ENCODE measurements at regions of chr1 and their contacts with region 1.

Region 1: DNA sequence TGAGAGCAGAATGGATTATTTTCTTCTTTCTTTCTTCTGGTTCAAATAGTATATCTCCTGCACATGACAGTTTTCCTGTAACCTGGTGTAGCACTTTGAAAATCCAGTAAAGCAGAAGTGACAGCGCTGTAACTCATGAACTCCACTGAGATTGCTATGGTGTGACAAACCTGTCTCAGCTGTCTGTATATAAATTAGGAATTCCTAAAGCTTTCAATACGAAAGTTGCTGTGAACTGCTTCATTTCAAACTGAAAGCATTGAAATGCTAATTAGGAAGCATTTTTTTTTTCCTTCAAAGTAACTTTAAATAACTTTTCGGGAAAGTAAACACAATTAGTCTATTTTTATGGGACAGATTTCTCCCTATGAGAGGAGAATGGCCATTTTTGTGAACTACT is 646.9 kb upstream of the ZP4 start:
- DNase-seq: no peak
- ATAC-seq: no peak

Region 2: GRCh38 chr1:237640011-237640671 is 897.5 kb before region 1 on chr1:
- intact Hi-C with region 1: loop called (anchors 5 kb)
- DNase-seq: no peak
- ATAC-seq: no peak

Region 3: GRCh38 chr1:238501290-238501689 is 36.4 kb before region 1 on chr1:
- intact Hi-C with region 1: no loop called
- DNase-seq: no peak
- ATAC-seq: no peak

Region 4: DNA sequence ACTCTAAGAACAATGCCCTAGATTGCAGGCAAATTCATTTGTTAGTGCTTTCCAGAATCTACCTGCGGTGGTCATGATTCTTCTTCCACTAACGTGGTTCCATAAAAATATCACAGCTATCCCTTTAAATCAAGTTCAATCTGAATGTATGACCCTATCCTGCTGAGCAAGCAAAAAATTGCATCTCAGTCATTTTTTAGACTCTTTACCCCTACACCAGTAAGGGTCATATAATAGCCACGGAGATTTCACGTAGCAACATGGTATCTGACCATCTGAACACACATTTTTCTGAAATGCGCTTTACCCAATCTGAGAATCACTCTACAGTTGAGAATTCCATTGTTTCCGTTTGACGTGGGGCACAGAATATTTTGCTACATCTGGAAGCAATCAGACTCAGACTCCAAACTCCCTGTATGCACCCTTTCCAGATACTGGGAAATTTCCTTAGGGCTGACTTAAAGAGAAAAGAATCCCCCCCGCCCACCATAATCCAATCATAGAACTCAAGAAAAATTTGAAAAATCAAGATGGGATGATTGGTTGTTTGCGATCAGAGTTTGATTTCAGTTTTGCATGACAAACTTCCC is 52.3 kb after region 1 on chr1:
- intact Hi-C with region 1: no loop called
- DNase-seq: no peak
- ATAC-seq: no peak

Region 5: GRCh38 chr1:238606896-238607295 is 69.3 kb after region 1 on chr1:
- intact Hi-C with region 1: no loop called
- DNase-seq: no peak
- ATAC-seq: no peak

Region 6: DNA sequence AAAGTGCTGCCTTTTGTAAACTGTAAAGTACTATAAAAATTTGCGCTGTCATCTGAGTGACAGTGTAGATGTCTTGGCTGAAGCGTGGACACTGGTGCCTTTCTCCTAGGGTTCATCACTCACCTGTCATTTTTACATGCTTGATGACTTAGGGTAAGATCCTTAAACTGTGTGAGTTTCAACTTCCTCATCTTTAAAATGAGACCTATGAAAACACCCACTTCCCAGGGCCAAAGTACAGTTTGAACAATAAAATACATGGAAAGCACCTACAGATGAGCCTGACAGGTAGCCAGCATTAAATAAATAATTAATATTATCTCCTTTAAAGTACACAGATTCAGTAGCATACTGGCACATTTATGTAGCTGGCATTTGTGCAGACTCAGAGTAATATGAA is 1158.7 kb after region 1 on chr1:
- intact Hi-C with region 1: loop called (anchors 5 kb)
- DNase-seq: no peak
- ATAC-seq: no peak